HEK293T (cell line): ENCODE measurements at regions of chr2 and their contacts with region 1.

Region 1: DNA sequence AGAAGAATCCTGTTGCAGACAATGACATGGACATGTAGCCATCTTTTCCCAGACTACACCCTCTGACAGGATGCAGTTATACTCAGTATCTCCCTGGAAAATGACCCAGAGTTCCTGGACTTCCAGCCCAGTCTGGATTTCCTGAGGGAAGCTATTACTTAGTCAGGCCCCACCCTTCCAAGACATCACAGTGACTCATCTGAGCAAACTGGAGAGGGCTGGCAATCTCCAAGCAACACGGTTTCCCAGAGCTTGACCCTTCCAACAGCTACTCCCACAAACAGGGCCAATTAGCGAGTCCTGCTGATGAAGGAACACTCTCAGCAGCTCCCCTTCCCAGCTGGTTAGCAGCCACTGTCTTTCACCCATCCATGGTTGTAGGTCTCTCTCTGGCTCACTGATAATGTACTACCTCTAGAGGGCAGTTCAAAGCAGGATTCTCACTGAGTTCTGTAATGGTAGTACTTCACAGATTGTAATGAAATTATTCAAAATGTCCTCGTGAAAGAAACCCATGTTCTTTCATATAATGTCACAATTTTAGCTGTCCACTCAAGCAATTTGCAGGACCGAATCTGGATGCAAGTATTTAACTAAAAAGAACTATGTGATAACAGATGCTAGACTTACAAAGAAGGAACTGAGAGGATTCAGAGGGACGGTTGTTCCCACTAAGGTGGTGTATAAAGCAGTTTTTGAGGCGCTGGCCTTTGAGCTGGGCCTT is 110.2 kb downstream of the MDH1 start:
- DNase-seq: peak; percentile 54

Region 2: DNA sequence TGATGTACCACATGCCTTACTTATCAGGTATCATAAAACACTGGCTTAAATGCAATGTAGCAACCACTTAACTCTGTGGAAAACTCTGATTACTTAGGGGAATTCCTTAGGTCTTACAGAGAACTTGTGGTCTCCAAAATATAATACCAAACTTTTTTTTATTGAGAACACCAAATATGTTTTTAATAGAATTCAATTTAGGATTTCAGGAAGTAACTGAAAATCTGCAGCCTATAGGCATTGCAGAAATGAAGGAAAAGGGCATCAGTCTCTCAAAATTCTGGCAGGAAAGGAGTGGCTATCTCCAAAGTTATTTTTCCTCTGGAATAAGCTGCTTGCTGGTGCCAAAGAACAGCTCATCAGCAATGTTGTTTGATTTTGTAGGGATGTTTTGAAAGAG is 37.4 kb after region 1 on chr2:
- CTCF ChIA-PET with region 1: no interaction called
- POLR2A ChIA-PET with region 1: no interaction called
- DNase-seq: no peak

Region 3: GRCh38 chr2:63861220-63861822 is 162.3 kb after region 1 on chr2:
- CTCF ChIA-PET with region 1: interaction called, 18 read pairs
- POLR2A ChIA-PET with region 1: interaction called, 3 read pairs
- DNase-seq: peak; percentile 39